HCT116 (cell line): ENCODE measurements at regions of chr4 and their contacts with region 1.

Region 1: DNA sequence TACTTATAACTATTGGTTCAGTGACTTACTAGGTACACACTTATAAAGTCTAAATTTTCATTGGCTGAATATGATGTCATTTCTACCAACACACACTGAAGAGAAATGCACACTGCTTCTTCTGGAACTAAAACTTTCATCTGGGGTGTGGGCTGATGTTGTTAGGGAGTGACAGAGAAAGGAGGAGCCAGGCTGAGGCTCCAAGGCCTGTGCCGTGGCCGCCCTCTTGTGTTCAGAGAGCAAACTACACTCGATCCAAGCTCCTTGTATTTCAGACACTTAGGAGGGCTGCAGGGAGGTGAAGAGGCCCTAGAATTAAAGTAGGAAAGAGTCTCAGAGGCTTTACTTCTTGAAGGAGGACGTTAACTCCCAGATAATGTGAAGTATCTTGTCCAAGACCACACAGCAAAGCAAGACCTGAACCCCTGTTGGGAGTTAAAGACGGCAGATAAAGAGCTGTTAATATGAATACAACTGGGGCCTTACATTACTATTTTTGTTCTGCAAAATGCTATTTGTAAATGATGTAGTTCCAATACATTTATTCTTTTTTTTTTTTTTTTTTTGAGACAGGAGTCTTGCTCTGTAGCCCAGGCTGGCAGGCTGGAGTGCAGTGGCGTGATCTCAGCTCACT is 137.5 kb downstream of the AFAP1 start:
- DNase-seq: peak; percentile 66
- ATAC-seq: peak; percentile 93
- H3K4me3 ChIP-seq: no peak overlapping the region
- H3K27ac ChIP-seq: no peak overlapping the region
- H3K4me1 ChIP-seq: peaks cover 7 to 8% of the 10 kb centered on the region in 2 experiments; a peak in 2 of 4 replicates
- H3K27me3 ChIP-seq: no peaks in the 10 kb centered on the region
- CTCF ChIP-seq: peak; percentile 75 to 87 (median 81)
- POLR2A ChIP-seq: no peak
- RAD21 ChIP-seq: peak; percentile 78

Region 2: DNA sequence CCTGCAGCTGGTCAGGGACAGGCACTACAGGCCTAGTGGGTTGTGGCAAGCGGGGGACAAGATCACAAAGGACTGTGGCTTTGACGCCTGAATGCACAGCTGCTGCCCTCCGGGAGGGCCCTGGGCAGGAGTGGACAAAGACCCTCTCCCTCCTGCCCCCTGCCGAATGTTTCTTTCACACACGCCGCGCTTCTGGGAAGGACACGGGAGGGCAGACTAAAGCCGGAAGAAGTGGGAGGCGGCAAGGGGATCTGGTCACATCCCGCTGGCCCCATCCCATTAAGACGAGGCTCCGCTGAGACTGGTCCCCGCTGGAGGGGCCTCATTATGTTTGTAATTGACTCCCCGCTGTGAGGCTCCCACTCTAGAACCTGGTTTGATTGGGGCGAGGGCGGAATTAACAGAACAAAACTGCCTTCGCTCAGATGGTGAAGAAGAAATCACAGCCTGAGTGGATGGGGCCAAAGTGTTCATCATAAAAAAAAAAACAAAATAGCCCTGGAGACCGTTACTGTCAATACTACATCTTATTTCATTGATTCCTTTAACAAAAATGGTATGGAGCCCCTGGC is 329.7 kb before region 1 on chr4:
- CTCF ChIA-PET with region 1: no interaction called
- POLR2A ChIA-PET with region 1: no interaction called
- RAD21 ChIA-PET with region 1: no interaction called
- intact Hi-C with region 1: no loop called
- DNase-seq: no peak
- ATAC-seq: no peak
- H3K4me3 ChIP-seq: no peak overlapping the region
- H3K27ac ChIP-seq: no peak overlapping the region
- H3K4me1 ChIP-seq: no peaks in the 10 kb centered on the region
- H3K27me3 ChIP-seq: peaks cover 21% of the 10 kb centered on the region
- CTCF ChIP-seq: no peak
- POLR2A ChIP-seq: no peak
- RAD21 ChIP-seq: no peak

Region 3: DNA sequence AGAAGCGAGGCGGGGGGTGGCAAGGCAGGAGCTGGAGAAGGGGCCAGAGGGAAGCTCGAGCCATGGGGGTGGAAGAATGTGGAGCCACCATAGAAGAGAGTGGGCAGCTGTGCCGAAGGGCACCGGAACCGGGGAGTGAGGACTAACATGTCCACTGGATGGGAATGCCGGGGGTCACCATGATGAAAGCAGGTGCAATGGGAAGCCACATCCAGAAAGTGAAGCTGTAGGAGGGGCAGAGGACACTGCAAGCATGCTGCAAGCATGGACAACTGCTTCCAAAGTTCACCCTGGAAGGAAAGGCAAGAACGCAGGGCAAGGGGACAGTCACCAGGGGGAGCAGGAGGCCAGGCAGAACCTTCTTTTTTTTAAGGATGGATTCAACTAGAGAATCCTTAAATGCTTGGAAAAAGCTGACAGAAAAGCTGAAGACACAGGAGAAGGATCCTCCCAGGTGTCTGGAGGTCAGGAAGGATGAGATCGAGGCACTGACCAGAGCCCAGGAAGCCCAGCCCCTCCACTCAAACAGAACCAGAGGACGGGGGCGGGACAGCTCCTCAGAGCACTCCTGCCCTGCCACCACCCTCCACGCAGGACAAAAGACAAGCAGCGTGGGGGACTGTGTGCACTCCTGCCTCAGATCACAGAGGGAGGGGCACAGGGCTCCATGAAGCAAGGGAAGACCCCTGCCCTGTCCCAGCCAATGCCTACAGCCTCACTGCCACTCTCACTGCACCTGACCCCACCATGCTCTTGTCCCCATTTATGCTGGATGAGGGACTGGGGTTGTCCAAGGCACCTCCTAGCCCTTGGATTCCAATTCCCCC is 31.8 kb before region 1 on chr4:
- CTCF ChIA-PET with region 1: interaction called, 3 read pairs
- POLR2A ChIA-PET with region 1: no interaction called
- RAD21 ChIA-PET with region 1: no interaction called
- intact Hi-C with region 1: loop called (anchors 1 kb)
- DNase-seq: no peak
- ATAC-seq: peak; percentile 73
- H3K4me3 ChIP-seq: no peak overlapping the region
- H3K27ac ChIP-seq: no peak overlapping the region
- H3K4me1 ChIP-seq: no peaks in the 10 kb centered on the region
- H3K27me3 ChIP-seq: no peaks in the 10 kb centered on the region
- CTCF ChIP-seq: peak; percentile 46 to 65 (median 62); a peak in 5 of 6 replicates
- POLR2A ChIP-seq: no peak
- RAD21 ChIP-seq: peak; percentile 56

Region 4: DNA sequence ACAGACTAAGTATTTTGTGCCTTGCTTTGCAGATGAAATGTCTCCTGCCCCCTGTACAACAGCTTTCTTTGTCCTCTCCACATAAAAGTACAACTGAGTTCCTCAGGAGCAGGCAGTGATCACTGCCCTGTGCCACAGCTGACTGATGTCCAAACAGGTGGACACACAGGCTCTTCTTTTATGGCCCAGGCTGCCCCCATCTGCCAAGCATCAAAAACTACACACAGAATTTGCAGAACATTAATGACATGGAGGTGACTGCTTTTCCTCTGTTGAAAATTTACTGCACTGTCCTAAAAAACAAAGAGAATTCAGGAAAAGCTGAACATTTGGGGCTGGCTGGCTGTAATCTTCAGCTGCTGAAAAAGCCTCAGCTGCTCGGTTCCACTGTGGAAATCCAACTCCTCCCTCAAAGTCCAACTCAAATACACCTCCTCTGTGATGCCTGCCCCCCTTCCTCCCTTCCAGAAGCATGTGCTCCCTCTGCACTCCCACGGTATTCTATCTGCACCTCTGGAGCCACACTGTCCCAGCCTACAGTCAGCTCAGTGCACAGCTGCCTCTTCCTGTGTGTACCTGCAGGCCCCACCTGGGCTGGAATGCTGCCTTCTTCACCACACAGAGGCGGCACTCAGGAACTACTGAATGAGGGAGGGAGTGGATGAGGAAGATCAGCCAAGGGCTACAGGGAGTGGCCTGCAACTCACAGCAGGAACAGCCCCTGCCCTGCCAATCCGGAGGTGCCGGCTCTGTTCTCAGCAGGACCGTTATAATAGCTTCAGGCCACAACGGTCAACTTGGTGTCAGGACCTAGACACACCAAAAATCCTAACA is 127.1 kb after region 1 on chr4:
- CTCF ChIA-PET with region 1: interaction called, 16 read pairs
- POLR2A ChIA-PET with region 1: no interaction called
- RAD21 ChIA-PET with region 1: no interaction called
- intact Hi-C with region 1: loop called (anchors 1 kb)
- DNase-seq: peak; percentile 34
- ATAC-seq: peak; percentile 95
- H3K4me3 ChIP-seq: peak overlapping the region in 1 of 2 experiments; percentile 30; a peak in 1 of 4 replicates
- H3K27ac ChIP-seq: peak overlapping the region; percentile 1; the same call in 1 of the 2 replicates
- H3K4me1 ChIP-seq: peaks cover 23 to 30% of the 10 kb centered on the region in 2 experiments
- H3K27me3 ChIP-seq: no peaks in the 10 kb centered on the region
- CTCF ChIP-seq: peak; percentile 25 to 49 (median 44); a peak in 4 of 6 replicates
- POLR2A ChIP-seq: no peak
- RAD21 ChIP-seq: peak; percentile 73

Region 5: GRCh38 chr4:7987148-7987989 is 185.2 kb after region 1 on chr4:
- CTCF ChIA-PET with region 1: interaction called, 82 read pairs
- POLR2A ChIA-PET with region 1: no interaction called
- RAD21 ChIA-PET with region 1: interaction called in 1 of 2 experiments, 8 read pairs
- intact Hi-C with region 1: loop called (anchors 1 kb)
- DNase-seq: peak; percentile 65
- ATAC-seq: peak; percentile 95
- H3K4me3 ChIP-seq: no peak overlapping the region
- H3K27ac ChIP-seq: no peak overlapping the region
- H3K4me1 ChIP-seq: no peaks in the 10 kb centered on the region
- H3K27me3 ChIP-seq: no peaks in the 10 kb centered on the region
- CTCF ChIP-seq: peak; percentile 85 to 90 (median 87)
- POLR2A ChIP-seq: no peak
- RAD21 ChIP-seq: peak; percentile 98

Region 6: DNA sequence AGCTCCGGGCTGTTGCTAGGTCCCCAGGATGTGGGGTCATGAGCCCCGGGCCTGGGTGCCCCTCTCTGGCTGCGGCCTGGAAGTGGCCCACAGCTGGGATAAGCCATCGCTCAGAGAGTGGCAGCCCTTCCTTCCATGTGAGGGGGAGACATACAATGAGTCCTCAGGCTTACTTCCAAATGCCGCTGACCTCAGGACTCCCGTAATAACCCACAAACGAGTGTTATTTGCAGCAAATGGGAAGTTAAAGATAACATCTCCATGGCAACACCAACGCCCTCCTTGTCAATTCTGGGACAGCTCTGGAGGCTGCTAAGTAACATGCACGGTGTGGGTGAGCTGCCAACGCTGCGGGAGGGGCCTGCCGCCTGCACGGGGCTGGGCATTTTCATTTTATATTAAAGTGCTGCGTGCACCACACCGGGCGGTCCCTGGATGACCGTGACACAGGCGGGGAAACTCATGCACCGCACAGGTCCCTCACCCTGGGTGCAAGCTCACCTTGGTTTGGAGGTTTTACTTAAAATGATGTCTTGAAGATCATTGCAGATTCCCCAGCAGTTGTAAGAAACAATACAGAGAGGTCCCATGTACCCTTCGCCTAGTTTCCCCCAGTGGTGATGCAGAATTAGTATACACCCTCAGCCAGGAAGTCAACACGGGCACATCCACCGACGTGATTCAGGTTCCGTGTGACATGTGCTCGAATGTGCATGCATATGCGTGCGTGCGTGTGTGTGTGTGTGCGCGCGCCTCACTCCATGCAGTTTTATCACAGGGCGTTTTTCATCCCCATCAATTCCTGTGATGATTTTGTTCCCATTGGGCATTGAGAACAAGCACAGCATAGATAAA is 277.0 kb after region 1 on chr4:
- CTCF ChIA-PET with region 1: no interaction called
- POLR2A ChIA-PET with region 1: no interaction called
- RAD21 ChIA-PET with region 1: no interaction called
- intact Hi-C with region 1: no loop called
- DNase-seq: no peak
- ATAC-seq: no peak
- H3K4me3 ChIP-seq: no peak overlapping the region
- H3K27ac ChIP-seq: no peak overlapping the region
- H3K4me1 ChIP-seq: no peaks in the 10 kb centered on the region
- H3K27me3 ChIP-seq: no peaks in the 10 kb centered on the region
- CTCF ChIP-seq: no peak
- POLR2A ChIP-seq: no peak
- RAD21 ChIP-seq: no peak

Region 7: GRCh38 chr4:8123389-8123788 is 321.2 kb after region 1 on chr4:
- CTCF ChIA-PET with region 1: no interaction called
- POLR2A ChIA-PET with region 1: no interaction called
- RAD21 ChIA-PET with region 1: no interaction called
- intact Hi-C with region 1: no loop called
- DNase-seq: no peak
- ATAC-seq: no peak
- H3K4me3 ChIP-seq: no peak overlapping the region
- H3K27ac ChIP-seq: no peak overlapping the region
- H3K4me1 ChIP-seq: no peaks in the 10 kb centered on the region
- H3K27me3 ChIP-seq: no peaks in the 10 kb centered on the region
- CTCF ChIP-seq: no peak
- POLR2A ChIP-seq: no peak
- RAD21 ChIP-seq: no peak